ENCODE measurements at regions of chr10 and their contacts with region 1.

Region 1: DNA sequence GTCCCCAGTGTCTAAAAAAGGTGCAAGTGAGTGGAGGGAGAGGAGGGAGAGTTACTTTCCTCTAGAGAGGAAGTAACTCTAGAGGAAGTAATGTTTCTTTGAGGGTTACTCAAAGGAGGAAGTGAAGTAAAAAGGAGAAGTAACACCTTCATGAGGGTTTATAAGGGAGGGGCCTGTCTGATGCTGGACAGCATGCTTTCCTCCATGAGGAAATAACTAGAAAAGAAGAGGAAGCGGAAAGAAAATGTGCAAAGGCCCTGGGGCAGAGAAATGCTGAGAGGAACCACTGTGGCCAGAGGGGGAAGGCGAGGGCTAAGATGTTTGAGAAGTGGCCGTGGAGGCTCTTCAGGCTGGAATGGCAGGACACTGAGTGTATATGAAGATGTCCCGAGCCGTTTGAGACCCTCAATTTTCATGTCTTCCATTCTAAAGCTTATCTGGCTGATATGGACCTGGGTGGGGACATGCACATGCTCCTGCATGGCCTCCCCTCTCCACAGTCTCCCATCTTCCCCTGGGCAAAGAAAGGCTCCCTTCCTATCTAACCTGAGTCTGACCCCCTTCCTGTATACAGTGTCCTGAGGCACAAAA is 3.4 kb upstream of the SLC18A2 start:
- DNase-seq: peak; percentile 76 to 91 (median 85)
- H3K4me3 ChIP-seq: no peak overlapping the region
- H3K4me3 Mint-ChIP-seq: no peak overlapping the region
- H3K27ac ChIP-seq: peak overlapping the region in 1 of 2 donors; percentile 44
- H3K27ac Mint-ChIP-seq: peak overlapping the region in 6 of 7 donors; percentile 50 to 87 (median 70)
- H3K4me1 ChIP-seq: peaks cover 0 to 13% of the 10 kb centered on the region in 2 donors
- H3K4me1 Mint-ChIP-seq: peaks cover 6% of the 10 kb centered on the region
- H3K27me3 ChIP-seq: peaks cover 23 to 26% of the 10 kb centered on the region in 2 donors
- H3K27me3 Mint-ChIP-seq: peaks cover 25 to 48% (median 38%) of the 10 kb centered on the region in 3 donors
- CTCF ChIP-seq: no peak

Region 2: DNA sequence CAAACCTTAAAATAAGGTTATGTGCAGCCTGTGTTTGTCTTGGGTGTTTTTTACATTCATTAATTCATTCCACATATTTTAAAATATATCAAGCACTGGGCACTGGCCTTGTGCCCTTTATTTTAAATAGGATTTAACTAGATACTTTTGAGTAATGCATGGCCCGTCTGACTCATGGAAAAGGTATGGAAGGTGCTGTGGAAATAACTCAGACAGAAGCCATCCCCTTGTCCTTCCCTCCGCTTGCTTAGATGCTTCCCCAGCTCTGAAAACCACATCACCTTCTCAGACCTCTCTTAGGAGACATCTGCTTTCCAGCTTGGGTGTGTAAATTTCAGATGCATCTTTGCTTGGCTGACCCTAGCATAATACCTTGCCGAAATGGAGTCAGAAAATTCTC is 33.9 kb after region 1 on chr10:
- intact Hi-C with region 1: no loop called
- DNase-seq: no peak
- H3K4me3 ChIP-seq: no peak overlapping the region
- H3K4me3 Mint-ChIP-seq: no peak overlapping the region
- H3K27ac ChIP-seq: no peak overlapping the region
- H3K27ac Mint-ChIP-seq: no peak overlapping the region
- H3K4me1 ChIP-seq: no peaks in the 10 kb centered on the region
- H3K4me1 Mint-ChIP-seq: peaks cover 2% of the 10 kb centered on the region
- H3K27me3 ChIP-seq: no peaks in the 10 kb centered on the region
- H3K27me3 Mint-ChIP-seq: peaks cover 1 to 4% (median 2%) of the 10 kb centered on the region in 3 donors
- CTCF ChIP-seq: no peak

Region 3: GRCh38 chr10:117442944-117443685 is 205.6 kb after region 1 on chr10:
- intact Hi-C with region 1: loop called in 1 of 2 experiments (anchors 5 kb)
- DNase-seq: peak; percentile 73 to 91 (median 86)
- H3K4me3 ChIP-seq: peak overlapping the region in 1 of 3 experiments; percentile 49
- H3K4me3 Mint-ChIP-seq: peak overlapping the region; percentile 67 to 81
- H3K27ac ChIP-seq: no peak overlapping the region
- H3K27ac Mint-ChIP-seq: peak overlapping the region in 4 of 7 donors; percentile 10 to 73 (median 44)
- H3K4me1 ChIP-seq: peaks cover 37 to 53% of the 10 kb centered on the region in 2 donors
- H3K4me1 Mint-ChIP-seq: peaks cover 49% of the 10 kb centered on the region
- H3K27me3 ChIP-seq: no peaks in the 10 kb centered on the region
- H3K27me3 Mint-ChIP-seq: peaks cover 0 to 3% (median 2%) of the 10 kb centered on the region in 3 donors
- CTCF ChIP-seq: peak; percentile 98

Measured in CD14-positive monocyte (primary cell).